ENCODE measurements at regions of chr2 and their contacts with region 1.

Region 1: GRCh38 chr2:44802777-44803424 is 138.6 kb upstream of the SIX3 start:
- DNase-seq: no peak
- H3K4me3 Mint-ChIP-seq: no peak overlapping the region
- H3K27ac Mint-ChIP-seq: no peak overlapping the region
- H3K4me1 Mint-ChIP-seq: no peaks in the 10 kb centered on the region
- H3K27me3 Mint-ChIP-seq: peaks cover 82% of the 10 kb centered on the region

Region 2: DNA sequence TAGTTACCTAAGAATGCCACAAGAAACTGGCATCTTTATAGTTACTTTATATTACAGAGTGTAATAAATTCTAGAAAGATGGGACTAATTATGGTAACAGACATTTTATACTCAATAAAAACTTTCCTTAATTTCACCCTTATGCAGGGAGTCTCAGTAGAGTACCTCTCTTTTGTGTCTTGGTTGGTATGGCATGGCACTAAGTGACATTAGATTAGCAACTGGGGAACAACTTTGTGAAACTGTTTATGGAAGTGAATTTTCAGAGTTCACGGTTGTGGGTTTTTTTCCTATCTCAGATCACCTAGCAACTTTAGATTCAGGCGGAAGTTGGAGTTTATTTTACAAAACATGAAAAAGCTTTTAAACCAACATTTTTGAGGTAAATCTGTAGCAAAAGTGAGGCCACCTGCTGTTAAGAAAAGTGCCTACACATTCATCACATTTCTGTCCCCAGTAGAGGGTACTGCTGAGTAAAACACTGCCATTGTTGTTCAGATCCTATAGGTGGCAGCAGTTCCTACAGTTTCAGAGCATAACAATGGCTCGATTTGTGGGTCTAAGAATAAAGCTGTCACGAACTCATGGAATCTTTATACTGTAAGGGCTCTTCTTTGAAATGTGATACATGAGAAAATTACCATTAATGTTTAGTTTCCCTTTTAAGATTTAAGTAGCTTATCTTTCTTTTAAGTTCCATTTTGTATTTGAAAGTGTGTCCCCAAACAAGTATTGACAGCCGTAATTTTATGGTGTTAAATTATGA is 323.6 kb before region 1 on chr2:
- intact Hi-C with region 1: loop called (anchors 10 kb)
- DNase-seq: peak; percentile 24
- H3K4me3 Mint-ChIP-seq: no peak overlapping the region
- H3K27ac Mint-ChIP-seq: no peak overlapping the region
- H3K4me1 Mint-ChIP-seq: no peaks in the 10 kb centered on the region
- H3K27me3 Mint-ChIP-seq: no peaks in the 10 kb centered on the region

Region 3: DNA sequence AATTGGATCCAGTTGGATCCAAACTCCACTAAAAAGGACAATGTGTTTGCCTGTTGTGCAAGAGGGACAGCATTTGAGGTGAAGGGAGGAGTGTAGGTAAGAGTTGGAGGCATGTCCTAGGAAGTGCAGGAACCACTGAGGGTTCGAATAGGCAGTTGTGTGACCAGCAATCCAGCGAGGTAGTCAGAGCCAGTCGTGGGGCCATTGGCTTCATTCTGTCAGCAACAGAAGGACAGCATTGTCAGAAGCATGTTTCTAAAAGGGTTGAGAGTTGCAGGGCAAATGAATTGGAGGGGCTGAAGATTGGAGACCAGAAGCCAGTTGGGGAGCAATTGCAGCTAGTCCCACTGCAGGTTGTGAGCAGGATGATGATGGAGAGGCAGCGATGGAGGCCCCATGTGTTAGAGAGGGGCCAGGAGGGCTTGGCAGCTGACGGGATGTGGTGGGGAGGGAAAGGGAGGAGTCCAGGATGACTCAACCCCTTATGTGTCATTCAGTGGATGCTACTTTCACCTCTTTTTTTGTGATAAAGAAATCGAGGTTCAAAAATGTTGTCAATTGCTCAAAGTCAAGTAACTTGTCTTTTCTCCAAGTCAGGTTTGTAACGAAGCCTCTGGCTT is 41.9 kb after region 1 on chr2:
- intact Hi-C with region 1: no loop called
- DNase-seq: no peak
- H3K4me3 Mint-ChIP-seq: no peak overlapping the region
- H3K27ac Mint-ChIP-seq: no peak overlapping the region
- H3K4me1 Mint-ChIP-seq: no peaks in the 10 kb centered on the region
- H3K27me3 Mint-ChIP-seq: peaks cover 12% of the 10 kb centered on the region

Region 4: GRCh38 chr2:44930274-44931197 is 127.6 kb after region 1 on chr2:
- intact Hi-C with region 1: loop called (anchors 2 kb)
- DNase-seq: no peak
- H3K4me3 Mint-ChIP-seq: no peak overlapping the region
- H3K27ac Mint-ChIP-seq: no peak overlapping the region
- H3K4me1 Mint-ChIP-seq: peaks cover 5% of the 10 kb centered on the region
- H3K27me3 Mint-ChIP-seq: peaks cover 83% of the 10 kb centered on the region

Region 5: DNA sequence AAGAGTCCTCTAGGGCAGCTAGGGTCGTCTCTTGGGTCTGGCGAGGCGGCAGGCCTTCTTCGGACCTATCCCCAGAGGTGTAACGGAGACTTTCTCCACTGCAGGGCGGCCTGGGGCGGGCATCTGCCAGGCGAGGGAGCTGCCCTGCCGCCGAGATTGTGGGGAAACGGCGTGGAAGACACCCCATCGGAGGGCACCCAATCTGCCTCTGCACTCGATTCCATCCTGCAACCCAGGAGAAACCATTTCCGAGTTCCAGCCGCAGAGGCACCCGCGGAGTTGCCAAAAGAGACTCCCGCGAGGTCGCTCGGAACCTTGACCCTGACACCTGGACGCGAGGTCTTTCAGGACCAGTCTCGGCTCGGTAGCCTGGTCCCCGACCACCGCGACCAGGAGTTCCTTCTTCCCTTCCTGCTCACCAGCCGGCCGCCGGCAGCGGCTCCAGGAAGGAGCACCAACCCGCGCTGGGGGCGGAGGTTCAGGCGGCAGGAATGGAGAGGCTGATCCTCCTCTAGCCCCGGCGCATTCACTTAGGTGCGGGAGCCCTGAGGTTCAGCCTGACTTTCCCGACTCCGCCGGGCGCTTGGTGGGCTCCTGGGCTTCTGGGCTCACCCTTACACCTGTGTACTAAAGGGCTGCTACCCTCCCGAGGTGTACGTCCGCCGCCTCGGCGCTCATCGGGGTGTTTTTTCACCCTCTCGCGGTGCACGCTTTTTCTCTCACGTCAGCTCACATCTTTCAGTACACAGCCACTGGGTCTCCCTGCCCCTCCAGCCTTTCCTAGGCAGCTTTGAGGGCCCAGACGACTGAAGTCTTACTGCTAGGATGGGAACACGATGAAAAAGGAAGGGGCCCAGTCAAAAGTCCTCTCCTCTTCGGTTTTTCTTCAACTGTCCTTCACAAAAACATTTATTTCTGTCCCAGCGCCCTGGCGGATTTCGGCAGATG is 198.3 kb after region 1 on chr2:
- intact Hi-C with region 1: loop called (anchors 2 kb)
- DNase-seq: no peak
- H3K4me3 Mint-ChIP-seq: no peak overlapping the region
- H3K27ac Mint-ChIP-seq: no peak overlapping the region
- H3K4me1 Mint-ChIP-seq: no peaks in the 10 kb centered on the region
- H3K27me3 Mint-ChIP-seq: peaks cover 73% of the 10 kb centered on the region

Region 6: DNA sequence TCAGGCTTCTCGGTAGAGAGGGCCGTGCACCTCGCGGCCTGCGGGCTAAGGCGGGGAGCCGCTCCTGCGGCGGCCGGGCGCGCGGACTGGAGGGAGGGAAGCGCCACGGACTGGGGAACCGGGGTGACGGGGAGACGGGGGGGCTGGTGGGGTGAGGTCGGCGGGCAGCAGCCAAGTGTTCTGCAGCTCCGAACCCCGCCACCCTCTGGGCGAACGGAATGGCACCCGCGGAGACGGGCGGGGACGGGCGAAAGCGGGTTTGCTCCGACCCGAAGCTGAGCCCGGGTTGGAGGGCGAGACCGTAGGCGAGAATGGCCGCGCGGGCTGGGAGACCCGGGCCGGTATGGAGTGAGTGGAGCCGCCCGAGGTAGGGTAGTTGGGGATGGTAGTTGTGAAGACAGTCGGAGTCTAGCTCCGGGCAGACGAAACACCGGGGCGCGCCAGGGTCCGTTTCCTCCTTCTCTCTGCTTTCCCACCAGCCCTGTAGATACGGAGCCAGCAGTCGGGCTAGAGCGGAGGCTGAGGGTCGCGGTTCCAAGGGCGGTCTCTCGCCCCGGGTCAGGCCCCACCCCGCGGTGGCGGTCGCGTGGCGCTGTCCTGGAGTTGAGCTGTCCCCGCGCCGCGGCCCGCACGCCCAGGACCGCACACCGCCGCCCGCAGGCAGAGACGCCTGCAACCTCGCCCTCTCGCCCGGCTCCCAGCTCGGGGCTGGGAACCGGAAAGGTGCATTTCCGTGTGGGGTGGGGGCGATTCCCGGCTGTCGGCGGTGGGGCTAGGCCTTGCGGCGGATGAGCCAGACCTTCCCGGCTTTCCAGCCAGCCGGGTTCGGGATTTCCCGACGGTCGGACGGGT is 366.7 kb after region 1 on chr2:
- intact Hi-C with region 1: loop called (anchors 5 kb)
- DNase-seq: no peak
- H3K4me3 Mint-ChIP-seq: no peak overlapping the region
- H3K27ac Mint-ChIP-seq: no peak overlapping the region
- H3K4me1 Mint-ChIP-seq: peaks cover 5% of the 10 kb centered on the region
- H3K27me3 Mint-ChIP-seq: peaks cover 69% of the 10 kb centered on the region

Measured in activated T-helper 1 cell treated with anti-CD3 and anti-CD28 coated beads, Interleukin-12 subunit alpha, Interleukin-12 subunit beta, Interleukin-2, Interleukin-4 antibody, amounts not matched to agents 30 ng/mL and 10 ng/mL and 1 ng/mL, durations not matched to agents 14 hours and 24 hours and 36 hours (primary cell).